A549 (cell line): ENCODE measurements at regions of chr4 and their contacts with region 1.

Region 1: GRCh38 chr4:15457406-15458201 is 12.1 kb upstream of the CC2D2A start:
- DNase-seq: peak in 1 of 2 experiments; percentile 37
- ATAC-seq: peak; percentile 68 to 81; a peak in 5 of 6 replicates
- H3K4me3 ChIP-seq: no peak overlapping the region
- H3K27ac ChIP-seq: peak overlapping the region in 1 of 2 experiments; percentile 64; a peak in 2 of 6 replicates
- H3K4me1 ChIP-seq: peaks cover 4% of the 10 kb centered on the region
- CTCF ChIP-seq: peak; percentile 68
- EP300 ChIP-seq: no peak
- POLR2A ChIP-seq: no peak
- RAD21 ChIP-seq: peak; percentile 72 to 77

Region 2: GRCh38 chr4:15231265-15232091 is 226.1 kb before region 1 on chr4:
- CTCF ChIA-PET with region 1: interaction called, 56 read pairs
- POLR2A ChIA-PET with region 1: no interaction called
- DNase-seq: peak; percentile 34 to 69
- ATAC-seq: peak; percentile 82 to 94; a peak in 5 of 6 replicates
- H3K4me3 ChIP-seq: no peak overlapping the region
- H3K27ac ChIP-seq: no peak overlapping the region
- H3K4me1 ChIP-seq: no peaks in the 10 kb centered on the region
- CTCF ChIP-seq: peak; percentile 51
- EP300 ChIP-seq: no peak
- POLR2A ChIP-seq: no peak
- RAD21 ChIP-seq: peak; percentile 61 to 63

Region 3: DNA sequence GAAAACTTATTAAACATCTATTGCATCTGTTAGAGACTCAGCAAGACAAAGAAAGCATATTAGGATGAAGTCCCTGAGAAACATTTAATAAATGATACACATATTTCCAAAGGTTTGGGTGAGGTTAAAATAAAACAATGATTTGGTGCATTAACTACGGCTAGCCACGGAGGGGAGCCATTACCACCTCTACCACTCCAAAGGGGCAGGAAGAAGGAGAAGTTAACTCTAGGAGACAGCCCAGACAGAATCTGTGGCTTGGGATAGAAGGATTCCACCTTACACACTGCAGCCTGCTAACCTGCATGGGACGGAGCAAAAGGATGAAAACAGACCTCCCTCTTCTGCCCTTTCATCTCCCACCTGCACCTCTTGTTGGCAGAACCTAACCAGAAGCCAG is 218.9 kb before region 1 on chr4:
- CTCF ChIA-PET with region 1: interaction called, 56 read pairs
- POLR2A ChIA-PET with region 1: no interaction called
- DNase-seq: peak; percentile 16 to 25
- ATAC-seq: peak; percentile 70 to 83; a peak in 5 of 6 replicates
- H3K4me3 ChIP-seq: no peak overlapping the region
- H3K27ac ChIP-seq: no peak overlapping the region
- H3K4me1 ChIP-seq: no peaks in the 10 kb centered on the region
- CTCF ChIP-seq: peak; percentile 56
- EP300 ChIP-seq: no peak
- POLR2A ChIP-seq: no peak
- RAD21 ChIP-seq: peak; percentile 69 to 74

Region 4: GRCh38 chr4:15444872-15445547 is 12.6 kb before region 1 on chr4:
- CTCF ChIA-PET with region 1: interaction called, 10 read pairs
- POLR2A ChIA-PET with region 1: no interaction called
- DNase-seq: no peak
- ATAC-seq: no peak
- H3K4me3 ChIP-seq: no peak overlapping the region
- H3K27ac ChIP-seq: no peak overlapping the region
- H3K4me1 ChIP-seq: no peaks in the 10 kb centered on the region
- CTCF ChIP-seq: no peak
- EP300 ChIP-seq: no peak
- POLR2A ChIP-seq: no peak
- RAD21 ChIP-seq: no peak

Region 5: GRCh38 chr4:15469402-15470127 is 12.0 kb after region 1 on chr4 and contains the start of gene CC2D2A:
- CTCF ChIA-PET with region 1: interaction called, 18 read pairs
- POLR2A ChIA-PET with region 1: no interaction called
- DNase-seq: peak; percentile 38 to 58
- ATAC-seq: peak; percentile 98 to 99
- H3K4me3 ChIP-seq: peak within 1 kb of the TSS; percentile 61
- H3K27ac ChIP-seq: peak within 1 kb of the TSS; percentile 63 to 81
- H3K4me1 ChIP-seq: no peaks in the 10 kb centered on the region
- CTCF ChIP-seq: no peak
- EP300 ChIP-seq: no peak
- POLR2A ChIP-seq: no peak
- RAD21 ChIP-seq: no peak
- polyA plus RNA-seq, gene CC2D2A: 18.8 and 23.3 TPM in 2 replicates